Heart left ventricle (tissue), 16 donors: ENCODE measurements at regions of chr20 and their contacts with region 1.

Region 1: DNA sequence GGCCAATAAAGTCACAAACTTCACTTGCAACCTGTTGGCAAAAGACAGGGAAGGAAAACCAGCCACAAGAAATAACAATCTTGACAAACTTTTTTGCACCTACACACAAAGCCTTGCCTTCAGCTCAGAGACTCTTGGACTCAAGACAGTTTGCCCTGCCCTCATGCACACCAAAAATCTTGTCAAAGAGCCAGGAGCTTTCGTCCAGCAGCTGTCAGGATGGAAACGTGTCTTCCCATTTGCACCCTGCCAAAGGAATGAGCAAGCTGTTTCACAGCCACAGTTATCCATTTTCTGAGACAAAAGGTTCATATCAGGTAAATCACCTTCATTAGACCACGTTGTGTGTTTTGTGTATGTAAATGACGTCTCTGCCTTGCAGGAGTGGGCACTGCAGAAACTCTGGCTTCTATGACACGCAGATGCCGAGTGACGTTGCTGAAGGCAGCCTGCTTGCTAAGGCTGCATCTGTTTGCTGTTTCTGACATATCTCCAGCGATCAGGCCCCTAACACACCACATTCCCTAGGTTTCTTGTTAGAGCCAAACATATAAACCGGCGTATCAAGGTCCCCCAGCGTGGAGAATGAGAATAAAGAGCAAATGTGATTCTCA is 193.4 kb downstream of the SYNDIG1 start:
- DNase-seq: no peak
- ATAC-seq: no peak
- H3K4me3 ChIP-seq: no peak overlapping the region
- H3K27ac ChIP-seq: no peak overlapping the region
- H3K4me1 ChIP-seq: peaks cover 0 to 4% (median 0%) of the 10 kb centered on the region in 12 donors
- H3K27me3 ChIP-seq: no peaks in the 10 kb centered on the region
- CTCF ChIP-seq: no peak
- POLR2A ChIP-seq: no peak

Region 2: DNA sequence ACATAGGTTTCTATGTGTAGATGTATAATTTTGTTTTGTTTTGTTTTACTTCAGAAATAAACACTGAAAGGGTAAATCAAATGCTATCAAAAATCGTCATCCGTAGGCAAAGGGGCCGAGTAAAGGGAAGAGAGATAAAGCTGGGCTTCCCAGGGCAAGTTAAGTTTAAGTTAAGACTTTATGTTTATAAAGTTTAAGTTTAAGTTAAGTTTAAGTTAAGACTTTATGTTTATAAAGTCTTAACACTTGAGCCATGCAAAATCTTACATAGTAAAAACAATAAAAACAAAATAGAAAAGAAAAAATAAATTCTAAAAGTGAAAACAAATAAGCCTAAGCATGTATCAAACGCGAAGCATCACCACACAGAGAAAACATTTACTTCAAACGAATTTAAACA is 409.5 kb before region 1 on chr20:
- intact Hi-C with region 1: loop called in 1 of 10 experiments (anchors 5 kb)
- DNase-seq: no peak
- ATAC-seq: no peak
- H3K4me3 ChIP-seq: no peak overlapping the region
- H3K27ac ChIP-seq: no peak overlapping the region
- H3K4me1 ChIP-seq: no peaks in the 10 kb centered on the region
- H3K27me3 ChIP-seq: peaks cover 0 to 4% (median 0%) of the 10 kb centered on the region in 9 donors
- CTCF ChIP-seq: no peak
- POLR2A ChIP-seq: no peak